ENCODE measurements at regions of chr4 and their contacts with region 1.

Region 1: GRCh38 chr4:25234390-25235370 is 847 bp downstream of the PI4K2B start:
- DNase-seq: peak; percentile 93
- H3K4me3 ChIP-seq: peak overlapping the region; percentile 74 to 98 (median 90)
- H3K27ac ChIP-seq: peak overlapping the region; percentile 92 to 98 (median 97)
- H3K4me1 ChIP-seq: peaks cover 4 to 50% (median 28%) of the 10 kb centered on the region in 6 donors
- H3K27me3 ChIP-seq: no peaks in the 10 kb centered on the region
- CTCF ChIP-seq: peak; percentile 26 to 73 (median 65)
- POLR2A ChIP-seq: no peak

Region 2: GRCh38 chr4:25159884-25160713 is 74.6 kb before region 1 on chr4 and contains the start of gene SEPSECS:
- intact Hi-C with region 1: loop called (anchors 5 kb)
- DNase-seq: peak; percentile 98
- H3K4me3 ChIP-seq: peak within 1 kb of the TSS; percentile 68 to 94 (median 82)
- H3K27ac ChIP-seq: peak within 1 kb of the TSS; percentile 93 to 98 (median 97)
- H3K4me1 ChIP-seq: peaks cover 12 to 62% (median 31%) of the 10 kb centered on the region in 6 donors
- H3K27me3 ChIP-seq: no peaks in the 10 kb centered on the region
- CTCF ChIP-seq: peak in 5 of 11 experiments; percentile 11 to 33 (median 22)
- POLR2A ChIP-seq: peak in 2 of 3 donors; percentile 38 to 40
- total RNA-seq, gene SEPSECS: 9.1 to 15.2 (median 13.2) TPM

Region 3: GRCh38 chr4:25312496-25313200 is 78.0 kb after region 1 on chr4 and contains the start of gene ZCCHC4:
- intact Hi-C with region 1: loop called (anchors 10 kb)
- DNase-seq: peak; percentile 98
- H3K4me3 ChIP-seq: peak within 1 kb of the TSS; percentile 40 to 80 (median 68)
- H3K27ac ChIP-seq: peak within 1 kb of the TSS; percentile 58 to 86 (median 80)
- H3K4me1 ChIP-seq: peaks cover 0 to 44% (median 21%) of the 10 kb centered on the region in 6 donors
- H3K27me3 ChIP-seq: peaks cover 0 to 4% (median 0%) of the 10 kb centered on the region in 7 donors
- CTCF ChIP-seq: peak; percentile 83 to 100 (median 100)
- POLR2A ChIP-seq: peak in 1 of 3 donors; percentile 19
- total RNA-seq, gene ZCCHC4: 10.5 to 14.7 (median 13.2) TPM